ENCODE measurements at regions of chr7 and their contacts with region 1.

Region 1: DNA sequence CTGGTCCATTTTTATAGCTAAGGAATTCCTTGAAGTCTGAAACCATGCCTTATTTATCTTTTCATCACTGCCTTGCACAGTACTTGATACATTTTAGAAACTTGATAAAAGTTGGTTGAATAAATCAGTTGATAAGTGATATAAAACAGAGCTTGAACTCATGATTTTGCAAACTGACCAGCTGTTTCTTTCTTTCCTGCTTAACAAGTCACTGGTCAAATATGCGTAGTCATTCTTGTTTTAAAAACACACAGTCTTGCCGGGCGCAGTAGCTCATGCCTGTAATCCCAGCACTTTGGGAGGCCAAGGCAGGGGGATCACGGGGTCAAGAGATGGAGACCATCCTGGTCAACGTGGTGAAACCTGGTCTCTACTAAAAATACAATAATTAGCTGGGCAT is 6.3 kb downstream of the TPST1 start:
- DNase-seq: no peak
- ATAC-seq: no peak
- H3K4me3 ChIP-seq: no peak overlapping the region
- H3K27ac ChIP-seq: no peak overlapping the region
- H3K4me1 ChIP-seq: peaks cover 9% of the 10 kb centered on the region
- H3K27me3 ChIP-seq: no peaks in the 10 kb centered on the region
- CTCF ChIP-seq: no peak

Region 2: DNA sequence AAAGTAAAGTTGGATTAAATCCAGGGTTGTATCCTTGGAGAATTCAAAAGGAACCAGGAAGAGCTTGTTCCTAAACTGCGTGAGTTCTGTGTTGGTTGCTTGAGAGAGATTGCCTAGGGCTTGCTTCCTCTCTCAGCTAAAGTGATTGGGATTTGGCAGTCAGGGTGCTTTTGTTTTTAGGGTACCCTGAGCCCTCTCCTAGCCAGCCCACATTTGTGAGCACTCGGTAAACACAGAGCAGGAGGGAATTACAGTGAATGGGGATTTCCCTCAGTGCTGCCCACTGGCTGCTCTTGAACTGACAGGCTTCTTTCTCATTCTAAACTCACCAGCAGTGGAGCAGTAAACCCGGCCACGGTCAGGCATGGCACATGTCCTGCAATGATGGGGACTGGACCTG is 140.6 kb after region 1 on chr7:
- CTCF ChIA-PET with region 1: no interaction called
- POLR2A ChIA-PET with region 1: no interaction called
- in situ Hi-C with region 1: no loop called
- intact Hi-C with region 1: loop called (anchors 10 kb)
- DNase-seq: no peak
- ATAC-seq: peak; percentile 73
- H3K4me3 ChIP-seq: no peak overlapping the region
- H3K27ac ChIP-seq: no peak overlapping the region
- H3K4me1 ChIP-seq: peaks cover 6% of the 10 kb centered on the region; the same call in 1 of the 2 replicates
- H3K27me3 ChIP-seq: no peaks in the 10 kb centered on the region
- CTCF ChIP-seq: no peak